Sigmoid colon (tissue), 7 donors: ENCODE measurements at regions of chrX and their contacts with region 1.

Region 1: DNA sequence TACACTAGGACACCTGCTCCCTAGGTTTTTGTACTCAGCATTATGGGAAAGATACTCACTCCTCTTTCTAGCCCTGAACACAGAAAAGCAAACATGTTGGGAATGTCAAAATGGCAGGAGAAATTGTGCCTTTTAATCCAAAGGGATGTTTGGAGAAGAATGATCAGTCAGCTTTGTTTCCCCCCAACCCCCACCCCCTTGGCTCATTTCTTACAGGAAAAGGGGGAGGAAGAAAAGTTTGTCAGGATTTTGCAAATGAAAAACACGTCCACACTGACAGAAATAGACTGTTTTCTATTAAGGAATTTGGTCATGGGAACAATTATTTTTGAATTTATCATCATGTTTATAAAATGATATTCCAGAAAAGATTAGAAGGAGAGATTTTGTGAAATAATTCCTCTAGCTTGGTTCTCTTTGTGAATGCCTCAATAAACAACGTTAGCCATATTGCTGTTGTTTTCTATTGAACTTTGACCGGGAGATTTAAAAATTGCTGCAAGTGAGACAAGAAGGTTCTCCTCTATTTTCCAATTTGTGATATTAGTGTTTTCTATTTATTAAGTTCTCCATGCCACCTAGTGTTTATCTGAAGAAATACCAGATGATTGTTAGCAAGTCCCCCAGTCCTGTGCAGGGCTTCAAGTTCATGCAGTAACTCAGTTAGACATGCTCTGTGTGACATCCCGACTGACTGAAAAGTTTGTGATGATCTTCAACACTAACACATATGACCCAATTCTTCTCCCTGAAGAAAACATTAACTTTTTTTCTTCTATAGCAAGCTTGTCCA is 31.3 kb upstream of the TFDP3 start:
- DNase-seq: no peak
- H3K4me3 ChIP-seq: no peak overlapping the region
- H3K27ac ChIP-seq: peak overlapping the region in 3 of 4 donors; percentile 69
- H3K4me1 ChIP-seq: peaks cover 0 to 17% (median 6%) of the 10 kb centered on the region in 4 donors
- H3K27me3 ChIP-seq: no peaks in the 10 kb centered on the region
- CTCF ChIP-seq: no peak
- EP300 ChIP-seq: no peak
- POLR2A ChIP-seq: no peak

Region 2: DNA sequence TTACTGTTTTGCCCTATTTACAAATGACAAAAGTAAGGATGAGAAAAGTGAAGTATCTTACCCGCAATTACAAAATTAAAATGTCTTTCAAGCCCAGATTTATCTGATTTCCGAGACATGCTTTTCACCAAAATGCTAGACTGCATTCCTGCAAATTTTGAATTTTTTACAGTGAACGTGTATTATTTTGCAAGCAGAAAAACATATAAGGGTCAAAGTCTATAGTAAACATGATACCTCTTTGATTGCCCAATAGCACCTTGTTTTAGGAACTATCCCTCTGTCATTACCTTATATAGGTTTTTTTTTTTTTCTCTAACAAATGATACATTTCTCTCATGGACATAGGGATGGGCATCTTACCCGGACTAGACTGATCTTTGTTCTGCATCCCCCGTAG is 896.0 kb before region 1 on chrX:
- intact Hi-C with region 1: no loop called
- DNase-seq: no peak
- H3K4me3 ChIP-seq: no peak overlapping the region
- H3K27ac ChIP-seq: no peak overlapping the region
- H3K4me1 ChIP-seq: no peaks in the 10 kb centered on the region
- H3K27me3 ChIP-seq: no peaks in the 10 kb centered on the region
- CTCF ChIP-seq: no peak
- EP300 ChIP-seq: no peak
- POLR2A ChIP-seq: no peak

Region 3: DNA sequence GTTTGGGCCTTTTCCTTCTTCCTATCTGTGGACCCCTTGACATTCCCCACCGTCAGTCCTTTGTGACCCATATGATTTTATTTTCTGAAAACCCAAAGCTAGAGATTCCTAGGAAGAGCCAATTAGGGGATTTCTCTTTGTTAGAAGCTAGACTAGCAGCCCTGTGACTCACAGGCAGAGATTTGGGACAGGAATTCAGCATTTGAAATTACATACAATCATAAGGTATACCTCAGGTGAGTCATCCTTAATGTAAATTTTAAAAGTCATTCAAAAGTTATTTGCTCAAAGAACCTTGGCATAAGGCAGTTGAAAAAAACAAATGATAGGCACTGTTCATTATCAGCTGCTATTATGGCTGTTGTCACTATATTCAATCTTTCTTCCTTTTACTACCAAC is 193.1 kb before region 1 on chrX:
- intact Hi-C with region 1: no loop called
- DNase-seq: no peak
- H3K4me3 ChIP-seq: no peak overlapping the region
- H3K27ac ChIP-seq: no peak overlapping the region
- H3K4me1 ChIP-seq: no peaks in the 10 kb centered on the region
- H3K27me3 ChIP-seq: no peaks in the 10 kb centered on the region
- CTCF ChIP-seq: no peak
- EP300 ChIP-seq: no peak
- POLR2A ChIP-seq: no peak

Region 4: DNA sequence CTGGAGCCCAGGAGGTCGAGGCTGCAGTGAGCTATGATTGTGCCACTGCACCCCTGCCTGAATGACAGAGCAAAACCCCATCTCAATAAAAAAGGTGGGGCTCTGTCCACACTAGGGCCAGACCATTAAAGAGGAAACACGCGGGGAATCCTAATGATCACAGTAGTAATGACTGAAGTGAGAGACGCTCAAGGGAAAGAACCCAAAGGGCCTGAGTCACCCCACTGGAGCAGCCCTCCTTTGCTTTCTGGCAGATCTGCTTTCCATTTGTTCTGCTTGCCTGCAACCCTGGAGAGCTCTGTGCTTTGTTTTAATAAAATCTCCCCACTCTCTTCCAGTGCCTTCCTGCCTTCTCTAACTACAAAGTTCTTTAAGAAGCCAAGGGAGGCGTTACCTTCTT is 36.3 kb before region 1 on chrX:
- intact Hi-C with region 1: no loop called
- DNase-seq: no peak
- H3K4me3 ChIP-seq: no peak overlapping the region
- H3K27ac ChIP-seq: no peak overlapping the region
- H3K4me1 ChIP-seq: no peaks in the 10 kb centered on the region
- H3K27me3 ChIP-seq: no peaks in the 10 kb centered on the region
- CTCF ChIP-seq: no peak
- EP300 ChIP-seq: no peak
- POLR2A ChIP-seq: no peak

Region 5: GRCh38 chrX:133307637-133308500 is 58.4 kb after region 1 on chrX:
- intact Hi-C with region 1: loop called (anchors 5 kb)
- DNase-seq: no peak
- H3K4me3 ChIP-seq: no peak overlapping the region
- H3K27ac ChIP-seq: peak overlapping the region; percentile 12 to 69 (median 64)
- H3K4me1 ChIP-seq: peaks cover 0 to 14% (median 7%) of the 10 kb centered on the region in 4 donors
- H3K27me3 ChIP-seq: no peaks in the 10 kb centered on the region
- CTCF ChIP-seq: peak in 1 of 4 experiments; percentile 10
- EP300 ChIP-seq: no peak
- POLR2A ChIP-seq: no peak

Region 6: DNA sequence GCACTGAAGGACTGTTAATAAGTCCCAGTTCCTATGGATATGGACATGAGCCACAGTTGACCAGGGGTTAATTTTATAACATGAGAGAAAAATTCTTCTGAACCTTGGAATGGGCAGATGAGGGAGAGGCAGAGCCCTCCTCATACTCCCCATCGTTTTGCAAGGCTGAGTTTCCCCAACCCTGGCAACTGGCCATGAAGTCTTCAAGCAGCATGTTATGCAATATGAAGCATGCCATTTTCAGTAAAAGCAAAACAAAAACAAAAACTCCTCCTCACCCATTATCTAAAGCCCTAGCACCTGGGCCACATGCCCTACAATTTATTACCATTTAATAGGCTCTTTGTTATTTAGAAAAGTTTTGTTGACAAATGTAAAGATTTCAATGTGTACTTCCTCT is 101.3 kb after region 1 on chrX:
- intact Hi-C with region 1: no loop called
- DNase-seq: peak; percentile 80
- H3K4me3 ChIP-seq: no peak overlapping the region
- H3K27ac ChIP-seq: no peak overlapping the region
- H3K4me1 ChIP-seq: peaks cover 0 to 7% (median 4%) of the 10 kb centered on the region in 4 donors
- H3K27me3 ChIP-seq: no peaks in the 10 kb centered on the region
- CTCF ChIP-seq: no peak
- EP300 ChIP-seq: no peak
- POLR2A ChIP-seq: no peak